A549 (cell line): ENCODE measurements at regions of chr9 and their contacts with region 1.

Region 1: DNA sequence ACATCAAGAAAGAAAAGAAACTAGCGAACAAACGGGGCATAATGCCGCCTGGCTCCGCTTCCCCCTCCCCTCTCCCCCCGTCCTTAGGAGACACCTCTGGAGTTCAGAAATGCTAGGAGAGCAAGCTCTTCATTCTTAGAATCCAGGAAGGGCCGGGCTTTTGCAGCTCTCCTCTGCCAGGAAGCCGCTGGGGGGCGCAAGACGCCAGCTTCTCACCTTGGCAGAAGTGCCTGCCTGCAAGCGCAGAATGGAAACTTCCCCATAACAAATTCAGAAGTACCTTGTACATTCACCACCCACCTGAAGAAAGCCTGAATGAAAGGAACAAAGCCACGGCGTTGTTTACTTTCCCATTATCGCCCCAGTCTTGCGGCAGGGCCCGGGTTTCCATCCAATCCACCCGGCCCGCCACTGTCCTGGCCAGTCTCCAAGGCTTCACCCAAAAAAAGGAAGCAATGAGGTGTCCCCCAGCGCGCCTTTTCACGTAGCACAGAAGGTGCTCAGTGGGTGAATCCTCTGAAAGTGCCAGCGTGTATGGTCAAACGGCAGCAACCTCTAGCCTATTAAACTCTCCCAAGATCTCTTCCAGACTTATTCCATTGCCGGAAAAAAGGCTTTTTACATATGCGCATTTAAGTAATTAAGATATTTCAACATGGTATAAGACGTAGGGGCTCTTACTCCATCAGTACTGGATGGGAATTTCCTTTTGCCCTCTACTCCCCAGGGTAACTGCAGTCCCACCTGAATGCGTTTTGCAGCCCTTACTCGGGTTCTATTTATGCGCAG is 1.6 kb upstream of the GADD45G start:
- DNase-seq: peak; percentile 71 to 88
- ATAC-seq: peak; percentile 60 to 77
- H3K4me3 ChIP-seq: peak overlapping the region; percentile 48
- H3K27ac ChIP-seq: peak overlapping the region in 1 of 2 experiments; percentile 36; a peak in 3 of 6 replicates
- H3K4me1 ChIP-seq: peaks cover 21% of the 10 kb centered on the region
- CTCF ChIP-seq: peak; percentile 87
- EP300 ChIP-seq: no peak
- POLR2A ChIP-seq: no peak
- RAD21 ChIP-seq: peak; percentile 91 to 95

Region 2: GRCh38 chr9:89613912-89614892 is 11.0 kb after region 1 on chr9:
- CTCF ChIA-PET with region 1: interaction called, 63 read pairs
- POLR2A ChIA-PET with region 1: no interaction called
- DNase-seq: no peak
- ATAC-seq: no peak
- H3K4me3 ChIP-seq: no peak overlapping the region
- H3K27ac ChIP-seq: no peak overlapping the region
- H3K4me1 ChIP-seq: no peaks in the 10 kb centered on the region
- CTCF ChIP-seq: no peak
- EP300 ChIP-seq: no peak
- POLR2A ChIP-seq: no peak
- RAD21 ChIP-seq: no peak

Region 3: GRCh38 chr9:89634995-89635742 is 32.0 kb after region 1 on chr9:
- CTCF ChIA-PET with region 1: interaction called, 27 read pairs
- POLR2A ChIA-PET with region 1: no interaction called
- DNase-seq: no peak
- ATAC-seq: no peak
- H3K4me3 ChIP-seq: no peak overlapping the region
- H3K27ac ChIP-seq: no peak overlapping the region
- H3K4me1 ChIP-seq: no peaks in the 10 kb centered on the region
- CTCF ChIP-seq: no peak
- EP300 ChIP-seq: no peak
- POLR2A ChIP-seq: no peak
- RAD21 ChIP-seq: no peak

Region 4: GRCh38 chr9:90095682-90096081 is 492.5 kb after region 1 on chr9:
- CTCF ChIA-PET with region 1: interaction called, 371 read pairs
- POLR2A ChIA-PET with region 1: interaction called, 4 read pairs
- DNase-seq: no peak
- ATAC-seq: no peak
- H3K4me3 ChIP-seq: no peak overlapping the region
- H3K27ac ChIP-seq: no peak overlapping the region
- H3K4me1 ChIP-seq: no peaks in the 10 kb centered on the region
- CTCF ChIP-seq: no peak
- EP300 ChIP-seq: no peak
- POLR2A ChIP-seq: no peak
- RAD21 ChIP-seq: no peak

Region 5: DNA sequence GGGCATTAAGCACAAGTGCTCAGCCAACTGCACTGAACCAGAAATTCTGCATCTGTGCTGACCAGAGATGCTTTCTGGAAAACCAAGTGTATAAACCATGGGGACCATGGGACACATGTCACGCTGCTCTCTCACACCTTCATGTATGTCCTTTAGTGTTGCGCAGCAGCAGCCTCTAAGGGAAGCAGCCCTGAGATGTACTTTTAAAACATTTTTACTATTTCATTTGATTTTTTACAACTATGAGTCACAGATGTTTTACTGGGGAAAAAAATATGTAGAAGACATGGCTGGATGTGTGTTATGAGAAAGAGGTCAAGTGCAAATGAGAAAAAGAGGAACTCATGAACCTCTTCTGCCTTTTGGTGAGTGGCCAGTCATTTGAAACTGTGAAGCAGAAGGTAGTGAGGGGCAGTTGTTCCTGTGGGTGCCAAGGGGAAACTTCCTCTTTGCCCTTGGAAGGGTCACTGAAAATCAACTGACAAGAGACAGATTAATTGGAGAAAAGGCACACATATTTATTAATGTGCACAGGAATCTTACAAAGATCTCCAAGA is 1167.1 kb after region 1 on chr9:
- CTCF ChIA-PET with region 1: no interaction called
- POLR2A ChIA-PET with region 1: interaction called, 10 read pairs
- DNase-seq: no peak
- ATAC-seq: no peak
- H3K4me3 ChIP-seq: no peak overlapping the region
- H3K27ac ChIP-seq: no peak overlapping the region
- H3K4me1 ChIP-seq: no peaks in the 10 kb centered on the region
- CTCF ChIP-seq: no peak
- EP300 ChIP-seq: no peak
- POLR2A ChIP-seq: no peak
- RAD21 ChIP-seq: no peak